Tibial artery (tissue), 4 donors: ENCODE measurements at regions of chr11 and their contacts with region 1.

Region 1: GRCh38 chr11:34051349-34052035 is at the start of gene CAPRIN1:
- DNase-seq: peak; percentile 82 to 91
- H3K4me3 ChIP-seq: peak within 1 kb of the TSS; percentile 94 to 98
- H3K27ac ChIP-seq: peak within 1 kb of the TSS; percentile 97 to 98
- H3K4me1 ChIP-seq: peaks cover 4 to 42% (median 29%) of the 10 kb centered on the region in 4 donors
- H3K27me3 ChIP-seq: no peaks in the 10 kb centered on the region
- CTCF ChIP-seq: no peak

Region 2: DNA sequence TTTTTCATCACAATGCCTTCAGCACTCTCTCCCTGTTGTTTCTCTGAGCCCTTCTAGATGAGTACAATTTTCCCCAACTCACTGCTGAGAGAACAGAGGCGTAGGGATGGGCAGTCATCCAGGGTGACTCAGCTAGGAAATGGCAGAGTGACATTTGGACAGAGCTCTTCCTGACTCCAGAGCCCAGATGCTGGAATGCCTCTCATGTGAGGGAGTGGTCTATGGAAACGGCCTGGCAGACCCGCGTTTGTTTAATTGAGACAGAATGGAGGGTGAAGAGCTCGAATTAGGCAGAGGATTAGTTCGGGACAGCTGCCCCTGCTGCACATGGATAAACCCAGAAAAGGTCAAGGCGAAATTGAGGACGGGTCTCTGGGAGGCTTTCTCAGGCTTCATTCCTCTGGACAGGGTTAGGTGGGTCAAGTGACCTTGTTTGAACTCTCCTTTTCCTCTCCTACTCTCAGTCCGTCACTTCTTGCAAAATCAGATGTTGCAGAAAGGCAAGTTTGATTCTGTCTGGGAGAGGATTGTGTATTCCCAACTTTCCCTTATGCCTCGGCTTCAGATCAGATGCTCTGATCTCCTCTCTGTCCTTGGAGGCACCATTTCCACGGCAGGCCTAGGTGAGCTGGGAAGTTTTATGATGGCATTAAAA is 152.0 kb before region 1 on chr11:
- intact Hi-C with region 1: no loop called
- DNase-seq: peak; percentile 89 to 90
- H3K4me3 ChIP-seq: no peak overlapping the region
- H3K27ac ChIP-seq: no peak overlapping the region
- H3K4me1 ChIP-seq: peaks cover 0 to 16% (median 6%) of the 10 kb centered on the region in 4 donors
- H3K27me3 ChIP-seq: no peaks in the 10 kb centered on the region
- CTCF ChIP-seq: no peak

Region 3: DNA sequence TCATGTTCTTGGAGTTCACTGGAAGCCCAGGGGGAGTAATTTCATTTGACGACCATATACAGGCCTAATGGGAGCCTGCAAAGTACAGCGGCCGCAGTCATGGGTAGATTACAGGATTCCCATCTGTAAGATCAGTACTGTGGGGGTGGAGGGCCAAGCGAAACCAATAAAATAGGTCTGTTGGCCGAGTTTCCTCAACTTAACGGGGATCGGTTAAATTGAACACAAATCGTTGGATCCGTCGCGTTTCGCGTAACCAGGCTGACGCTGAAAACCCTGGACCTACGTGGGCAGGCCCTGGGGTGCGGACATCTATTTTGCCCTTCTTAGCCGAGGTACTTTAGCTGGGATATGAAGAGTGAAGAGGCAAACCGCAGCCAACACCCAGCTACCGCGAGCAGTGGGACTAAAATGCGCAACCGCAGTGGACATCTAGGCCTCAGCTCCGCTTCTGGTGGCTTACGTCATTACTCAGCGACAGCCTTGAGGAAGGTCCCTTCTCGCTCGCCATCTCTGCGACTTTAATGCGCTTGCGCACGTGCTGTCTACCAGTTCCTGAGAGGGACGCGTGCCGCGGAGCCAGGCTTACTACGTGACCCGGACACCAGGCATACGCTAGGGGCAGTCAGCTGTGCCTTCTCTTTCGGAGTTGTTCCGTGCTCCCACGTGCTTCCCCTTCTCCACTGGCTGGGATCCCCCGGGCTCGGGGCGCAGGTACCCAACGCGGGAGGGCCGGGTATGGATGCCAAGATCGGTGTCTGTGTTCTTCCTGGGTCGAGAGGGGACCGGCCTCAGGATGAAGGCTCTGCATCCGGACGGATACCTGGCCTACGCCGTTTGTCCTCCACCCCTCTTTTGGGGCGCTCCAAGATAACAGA is 53.8 kb after region 1 on chr11 and contains the start of gene NAT10:
- intact Hi-C with region 1: loop called (anchors 5 kb)
- DNase-seq: peak; percentile 98
- H3K4me3 ChIP-seq: peak within 1 kb of the TSS; percentile 64 to 67
- H3K27ac ChIP-seq: peak within 1 kb of the TSS; percentile 95 to 96
- H3K4me1 ChIP-seq: peaks cover 0 to 19% (median 16%) of the 10 kb centered on the region in 4 donors
- H3K27me3 ChIP-seq: no peaks in the 10 kb centered on the region
- CTCF ChIP-seq: no peak